Activated CD4-positive, alpha-beta T cell treated with anti-CD3 and anti-CD28 coated beads for 36 hours (primary cell): ENCODE measurements at regions of chr2 and their contacts with region 1.

Region 1: GRCh38 chr2:237744613-237745249 is 53.8 kb upstream of the RBM44 start:
- DNase-seq: peak; percentile 84
- ATAC-seq: peak; percentile 85
- H3K4me3 Mint-ChIP-seq: no peak overlapping the region
- H3K27ac Mint-ChIP-seq: peak overlapping the region; percentile 63
- H3K4me1 Mint-ChIP-seq: peaks cover 35% of the 10 kb centered on the region
- H3K27me3 Mint-ChIP-seq: no peaks in the 10 kb centered on the region

Region 2: GRCh38 chr2:237540823-237541222 is 203.9 kb before region 1 on chr2:
- CTCF ChIA-PET with region 1: no interaction called
- POLR2A ChIA-PET with region 1: no interaction called
- intact Hi-C with region 1: no loop called
- DNase-seq: no peak
- ATAC-seq: no peak
- H3K4me3 Mint-ChIP-seq: no peak overlapping the region
- H3K27ac Mint-ChIP-seq: no peak overlapping the region
- H3K4me1 Mint-ChIP-seq: no peaks in the 10 kb centered on the region
- H3K27me3 Mint-ChIP-seq: no peaks in the 10 kb centered on the region

Region 3: DNA sequence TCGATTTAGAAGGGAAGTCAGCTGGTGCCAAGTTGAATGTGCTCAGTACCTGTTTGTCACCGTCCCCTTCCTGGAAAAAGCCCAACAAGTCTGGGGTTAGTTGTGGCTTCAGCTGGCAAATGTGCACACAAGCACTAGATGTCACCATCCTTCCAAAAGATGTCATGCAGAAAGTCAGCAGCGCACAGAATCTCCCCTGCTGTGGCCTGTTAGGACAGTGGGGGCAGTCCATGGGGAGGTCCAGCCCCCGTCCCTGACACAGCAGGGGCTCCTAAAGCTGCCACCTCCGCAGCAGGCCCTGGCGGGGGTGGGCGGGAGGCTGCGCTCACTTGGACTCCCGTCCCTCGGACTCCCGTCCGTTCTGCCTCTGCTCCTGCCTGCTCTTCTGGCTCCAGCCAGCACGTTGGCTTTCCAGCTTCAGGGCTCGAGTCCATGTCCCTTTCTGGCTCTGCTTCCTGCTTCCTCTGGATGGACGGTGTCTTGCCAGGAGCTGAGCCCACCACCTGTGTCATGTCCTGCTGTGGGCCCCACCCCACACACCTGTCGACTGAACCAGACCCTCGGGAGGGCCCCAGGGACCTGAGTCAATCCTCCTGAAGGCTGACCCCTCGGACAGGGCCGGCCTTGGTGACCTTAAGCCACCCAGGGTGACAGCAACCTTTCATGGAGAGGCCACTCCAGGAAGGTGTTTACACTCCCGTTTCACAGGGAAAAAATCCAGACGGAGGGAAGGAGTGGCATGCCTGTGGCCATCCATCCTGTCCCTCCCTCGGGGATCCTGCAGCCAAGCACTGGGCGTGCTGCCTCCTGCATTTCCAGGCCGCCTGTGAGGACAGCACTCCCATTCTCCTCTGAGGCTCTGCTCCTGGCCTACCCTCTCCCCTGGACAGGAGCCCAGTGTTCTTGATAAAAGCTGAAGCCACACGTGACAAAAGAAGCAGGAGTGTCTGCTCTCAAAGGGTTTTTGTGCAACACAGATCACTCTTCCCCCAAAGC is 162.7 kb before region 1 on chr2:
- CTCF ChIA-PET with region 1: interaction called, 11 read pairs
- POLR2A ChIA-PET with region 1: no interaction called
- intact Hi-C with region 1: loop called (anchors 1 to 2 kb)
- DNase-seq: peak; percentile 82
- ATAC-seq: peak; percentile 99
- H3K4me3 Mint-ChIP-seq: no peak overlapping the region
- H3K27ac Mint-ChIP-seq: peak overlapping the region; percentile 58
- H3K4me1 Mint-ChIP-seq: peaks cover 3% of the 10 kb centered on the region
- H3K27me3 Mint-ChIP-seq: no peaks in the 10 kb centered on the region

Region 4: GRCh38 chr2:237601453-237602116 is 143.1 kb before region 1 on chr2:
- CTCF ChIA-PET with region 1: interaction called, 11 read pairs
- POLR2A ChIA-PET with region 1: no interaction called
- intact Hi-C with region 1: no loop called
- DNase-seq: no peak
- ATAC-seq: no peak
- H3K4me3 Mint-ChIP-seq: no peak overlapping the region
- H3K27ac Mint-ChIP-seq: no peak overlapping the region
- H3K4me1 Mint-ChIP-seq: peaks cover 30% of the 10 kb centered on the region
- H3K27me3 Mint-ChIP-seq: no peaks in the 10 kb centered on the region

Region 5: DNA sequence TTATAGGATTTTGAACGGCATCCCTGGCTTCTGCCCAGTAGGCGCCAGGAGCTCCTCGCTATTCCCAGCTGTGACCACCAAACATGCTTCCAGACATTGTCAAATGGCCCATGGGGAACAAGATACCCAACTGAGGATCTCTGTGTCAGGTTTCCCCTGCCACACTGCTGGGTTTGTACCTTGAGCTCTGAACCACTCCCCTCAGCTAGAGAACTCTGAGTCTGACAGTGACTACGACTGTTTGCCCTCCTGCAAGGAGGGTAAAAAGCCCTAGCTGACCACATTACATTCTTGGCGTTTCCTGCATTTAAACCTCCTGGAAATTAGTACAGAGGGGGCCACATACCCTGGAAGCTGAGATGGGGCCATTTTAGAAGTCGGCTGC is 104.9 kb before region 1 on chr2:
- CTCF ChIA-PET with region 1: no interaction called
- POLR2A ChIA-PET with region 1: no interaction called
- intact Hi-C with region 1: no loop called
- DNase-seq: no peak
- ATAC-seq: no peak
- H3K4me3 Mint-ChIP-seq: no peak overlapping the region
- H3K27ac Mint-ChIP-seq: no peak overlapping the region
- H3K4me1 Mint-ChIP-seq: peaks cover 6% of the 10 kb centered on the region
- H3K27me3 Mint-ChIP-seq: no peaks in the 10 kb centered on the region

Region 6: DNA sequence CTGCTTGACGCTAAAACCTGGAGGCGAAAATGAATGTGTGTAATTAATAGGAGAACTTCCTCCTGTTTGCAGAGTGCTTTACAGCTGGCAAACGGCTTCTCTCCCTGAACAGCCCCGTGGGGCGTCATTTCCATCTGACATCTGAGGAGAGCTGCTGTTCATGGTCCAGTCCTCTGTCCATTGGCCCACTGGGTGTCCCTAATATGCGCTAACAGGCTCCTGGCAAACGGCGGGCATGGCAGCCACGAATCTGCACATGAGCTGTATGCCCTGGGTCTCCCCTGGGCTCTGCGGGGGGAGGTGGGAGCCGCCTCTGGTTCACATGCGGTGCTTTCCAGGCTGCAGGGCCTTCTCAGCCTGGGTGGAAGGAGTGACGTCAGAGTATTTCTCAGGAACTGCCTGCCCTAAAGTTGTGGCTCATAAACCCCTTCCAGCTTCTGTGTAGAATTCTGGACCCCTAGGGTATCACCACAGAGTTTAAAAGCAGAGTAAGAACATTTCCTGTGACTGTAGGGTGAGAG is 44.2 kb before region 1 on chr2:
- CTCF ChIA-PET with region 1: interaction called, 16 read pairs
- POLR2A ChIA-PET with region 1: interaction called, 3 read pairs
- intact Hi-C with region 1: no loop called
- DNase-seq: peak; percentile 90
- ATAC-seq: peak; percentile 63
- H3K4me3 Mint-ChIP-seq: peak overlapping the region; percentile 70
- H3K27ac Mint-ChIP-seq: peak overlapping the region; percentile 95
- H3K4me1 Mint-ChIP-seq: peaks cover 97% of the 10 kb centered on the region
- H3K27me3 Mint-ChIP-seq: no peaks in the 10 kb centered on the region

Region 7: GRCh38 chr2:237717366-237718276 is 27.1 kb before region 1 on chr2:
- CTCF ChIA-PET with region 1: interaction called, 10 read pairs
- POLR2A ChIA-PET with region 1: interaction called, 3 read pairs
- intact Hi-C with region 1: no loop called
- DNase-seq: no peak
- ATAC-seq: no peak
- H3K4me3 Mint-ChIP-seq: no peak overlapping the region
- H3K27ac Mint-ChIP-seq: no peak overlapping the region
- H3K4me1 Mint-ChIP-seq: peaks cover 64% of the 10 kb centered on the region
- H3K27me3 Mint-ChIP-seq: no peaks in the 10 kb centered on the region

Region 8: DNA sequence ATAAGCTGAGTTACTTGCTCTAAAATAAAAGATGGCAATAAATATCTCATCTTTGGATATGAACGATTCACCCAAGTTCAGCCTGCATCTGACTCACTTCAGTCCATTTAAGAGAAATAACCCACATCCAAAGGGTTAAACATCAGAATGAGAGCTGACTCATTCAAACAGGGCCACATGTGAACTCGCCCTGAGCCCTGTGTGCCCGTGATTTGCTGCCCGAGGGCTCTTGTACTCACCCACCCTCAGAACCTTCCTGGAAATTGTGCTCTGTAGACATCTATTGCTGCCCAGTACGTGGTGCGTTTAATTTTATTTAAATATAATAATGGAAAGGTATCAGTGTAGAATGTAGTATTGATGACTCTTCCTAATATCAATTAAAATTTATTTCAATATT is 13.1 kb before region 1 on chr2:
- CTCF ChIA-PET with region 1: interaction called, 17 read pairs
- POLR2A ChIA-PET with region 1: no interaction called
- intact Hi-C with region 1: no loop called
- DNase-seq: peak; percentile 77
- ATAC-seq: peak; percentile 98
- H3K4me3 Mint-ChIP-seq: peak overlapping the region; percentile 43
- H3K27ac Mint-ChIP-seq: peak overlapping the region; percentile 96
- H3K4me1 Mint-ChIP-seq: peaks cover 64% of the 10 kb centered on the region
- H3K27me3 Mint-ChIP-seq: no peaks in the 10 kb centered on the region